Panc1 (cell line): ENCODE measurements at regions of chr11 and their contacts with region 1.

Region 1: GRCh38 chr11:119481021-119481666 is 58.2 kb upstream of the THY1 start:
- DNase-seq: peak; percentile 57
- ATAC-seq: peak; percentile 91
- H3K4me3 ChIP-seq: no peak overlapping the region
- H3K27ac ChIP-seq: no peak overlapping the region
- H3K4me1 ChIP-seq: no peaks in the 10 kb centered on the region
- H3K27me3 ChIP-seq: no peaks in the 10 kb centered on the region
- CTCF ChIP-seq: peak; percentile 98

Region 2: DNA sequence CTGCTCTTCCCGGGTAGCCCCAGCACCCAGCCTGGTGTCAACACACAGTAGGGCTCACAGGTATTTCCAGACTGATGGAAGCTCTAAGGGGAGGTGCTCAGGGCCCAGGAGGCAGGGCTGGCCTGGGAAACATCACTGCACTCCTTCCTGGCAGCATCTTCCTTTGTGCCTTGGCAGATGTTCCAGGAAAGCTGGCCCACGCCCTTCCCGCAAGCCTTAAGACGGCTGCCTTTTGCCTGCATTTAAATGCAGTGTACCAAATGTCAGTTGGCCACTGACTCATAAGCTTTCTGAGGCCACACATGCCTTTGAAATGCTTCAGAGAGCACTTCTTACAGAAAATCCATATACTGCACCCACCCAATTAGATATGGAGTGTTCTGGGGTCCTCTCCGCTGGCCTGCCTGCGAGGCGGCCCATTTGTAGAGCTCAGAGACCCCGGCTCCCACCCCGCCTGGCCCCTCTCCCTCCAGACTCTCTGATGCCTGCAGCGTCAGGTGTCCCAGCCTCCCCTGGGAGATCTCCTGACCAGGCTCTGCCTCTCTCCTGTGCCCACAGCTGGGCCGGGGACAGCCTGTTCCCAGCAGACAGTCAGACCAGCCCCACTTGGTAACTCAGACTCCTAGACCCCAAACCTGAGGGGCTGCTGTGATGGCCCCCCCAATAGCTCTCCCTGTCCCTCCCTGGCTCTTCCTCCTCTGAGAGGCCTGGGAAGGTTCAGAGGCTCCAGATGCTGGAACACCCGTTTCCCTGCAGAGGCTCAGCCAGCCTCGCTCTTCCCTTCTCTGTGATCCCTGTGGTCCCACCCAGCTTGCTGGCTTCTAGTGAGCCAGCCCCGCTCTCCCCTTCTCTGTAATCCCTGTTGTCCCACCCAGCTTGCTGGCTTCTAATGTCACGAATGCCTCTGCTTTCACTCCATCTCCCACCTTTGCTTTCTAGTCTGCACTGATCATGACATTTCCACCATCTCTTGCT is 10.5 kb before region 1 on chr11:
- CTCF ChIA-PET with region 1: no interaction called
- POLR2A ChIA-PET with region 1: no interaction called
- in situ Hi-C with region 1: no loop called
- intact Hi-C with region 1: no loop called
- DNase-seq: no peak
- ATAC-seq: no peak
- H3K4me3 ChIP-seq: no peak overlapping the region
- H3K27ac ChIP-seq: no peak overlapping the region; the same call in 1 of the 2 replicates
- H3K4me1 ChIP-seq: no peaks in the 10 kb centered on the region
- H3K27me3 ChIP-seq: no peaks in the 10 kb centered on the region
- CTCF ChIP-seq: no peak

Region 3: DNA sequence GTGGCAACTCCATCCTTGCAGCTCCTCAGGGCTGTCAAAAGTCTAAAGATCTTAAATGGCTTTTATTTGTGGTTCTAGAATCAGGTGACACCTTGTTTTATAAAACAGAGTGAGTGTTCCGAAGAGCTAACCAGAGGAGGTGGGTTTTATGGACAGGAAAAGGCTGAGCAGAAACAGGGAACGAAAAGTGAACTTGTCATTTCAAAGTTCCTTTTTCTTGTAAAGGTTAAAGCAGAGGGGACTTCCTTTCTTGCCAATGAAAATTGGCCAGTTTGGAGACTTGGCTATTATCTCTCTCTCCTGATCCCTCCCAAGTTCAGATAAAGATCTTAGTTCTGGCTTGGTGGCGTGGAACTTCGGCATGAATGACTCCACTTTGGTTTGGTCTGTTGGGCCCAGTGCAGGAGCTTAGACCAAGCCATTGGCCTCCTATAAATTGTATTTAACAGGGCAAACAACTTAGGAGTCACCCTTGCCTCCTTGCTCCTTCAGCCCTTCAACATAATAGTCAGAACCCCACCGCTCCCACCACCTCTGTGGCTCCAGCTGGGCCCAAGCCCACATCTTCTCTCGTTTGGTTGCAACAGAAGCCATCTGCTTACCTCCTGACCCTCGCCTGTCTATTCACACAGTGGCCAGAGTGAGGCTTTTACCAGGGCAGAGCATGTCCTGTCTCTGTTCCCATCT is 44.2 kb after region 1 on chr11:
- CTCF ChIA-PET with region 1: interaction called, 11 read pairs
- POLR2A ChIA-PET with region 1: no interaction called
- in situ Hi-C with region 1: no loop called
- intact Hi-C with region 1: no loop called
- DNase-seq: no peak
- ATAC-seq: no peak
- H3K4me3 ChIP-seq: no peak overlapping the region
- H3K27ac ChIP-seq: no peak overlapping the region
- H3K4me1 ChIP-seq: no peaks in the 10 kb centered on the region
- H3K27me3 ChIP-seq: no peaks in the 10 kb centered on the region; the same call in 1 of the 2 replicates
- CTCF ChIP-seq: no peak

Region 4: GRCh38 chr11:119584193-119585037 is 103.3 kb after region 1 on chr11:
- CTCF ChIA-PET with region 1: interaction called, 12 read pairs
- POLR2A ChIA-PET with region 1: no interaction called
- in situ Hi-C with region 1: no loop called
- intact Hi-C with region 1: no loop called
- DNase-seq: no peak
- ATAC-seq: peak; percentile 75
- H3K4me3 ChIP-seq: peak overlapping the region; percentile 39 to 46
- H3K27ac ChIP-seq: no peak overlapping the region
- H3K4me1 ChIP-seq: peaks cover 7% of the 10 kb centered on the region; the same call in 1 of the 2 replicates
- H3K27me3 ChIP-seq: peaks cover 18% of the 10 kb centered on the region
- CTCF ChIP-seq: no peak

Region 5: GRCh38 chr11:119728651-119729580 is 247.8 kb after region 1 on chr11 and contains the start of gene NECTIN1:
- CTCF ChIA-PET with region 1: no interaction called
- POLR2A ChIA-PET with region 1: no interaction called
- in situ Hi-C with region 1: no loop called
- intact Hi-C with region 1: loop called (anchors 10 kb)
- DNase-seq: peak; percentile 39
- ATAC-seq: peak; percentile 96
- H3K4me3 ChIP-seq: peak within 1 kb of the TSS; percentile 51 to 65
- H3K27ac ChIP-seq: peak within 1 kb of the TSS; percentile 71
- H3K4me1 ChIP-seq: peaks cover 15% of the 10 kb centered on the region
- H3K27me3 ChIP-seq: peaks cover 6% of the 10 kb centered on the region
- CTCF ChIP-seq: peak; percentile 100
- total RNA-seq, gene NECTIN1: 14.6 TPM

Region 6: DNA sequence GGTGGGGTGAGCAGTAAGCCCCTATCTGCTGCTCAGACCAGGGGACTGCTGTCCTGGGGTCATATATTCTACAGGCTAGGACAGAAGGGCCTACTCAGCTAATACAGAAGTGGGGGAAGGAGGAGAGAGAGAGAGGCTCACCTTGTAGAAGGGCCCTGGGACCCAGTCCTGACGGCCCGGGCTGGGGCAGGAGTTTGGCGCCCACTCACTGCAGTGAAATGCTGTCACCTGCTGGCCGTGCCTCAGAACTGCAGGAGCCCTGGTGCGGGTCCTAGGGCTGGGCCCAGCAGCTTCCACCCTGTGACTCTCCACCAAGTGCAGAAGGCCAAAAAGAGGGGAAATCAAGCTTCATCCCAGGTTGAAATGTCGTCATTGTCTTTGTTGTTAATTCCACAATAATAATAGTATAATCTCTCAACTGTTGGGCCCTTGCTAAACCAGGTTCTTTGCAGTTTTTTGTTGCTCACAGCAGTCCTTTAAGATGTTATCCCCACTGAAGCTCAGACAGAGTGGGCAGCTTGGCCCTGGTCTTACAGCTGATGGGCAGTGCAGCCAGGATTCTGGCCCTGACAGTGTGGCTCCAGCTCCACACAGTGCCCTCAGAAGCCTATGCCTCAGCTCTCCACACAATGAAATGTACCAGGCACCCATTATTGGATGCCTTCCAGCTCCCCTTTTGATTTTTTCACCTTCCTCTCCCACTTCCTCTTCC is 627.2 kb after region 1 on chr11:
- CTCF ChIA-PET with region 1: no interaction called
- POLR2A ChIA-PET with region 1: no interaction called
- in situ Hi-C with region 1: no loop called
- intact Hi-C with region 1: loop called (anchors 2 kb)
- DNase-seq: peak; percentile 56
- ATAC-seq: peak; percentile 91
- H3K4me3 ChIP-seq: no peak overlapping the region
- H3K27ac ChIP-seq: no peak overlapping the region
- H3K4me1 ChIP-seq: no peaks in the 10 kb centered on the region
- H3K27me3 ChIP-seq: peaks cover 7% of the 10 kb centered on the region
- CTCF ChIP-seq: peak; percentile 100